ENCODE measurements at regions of chr21 and their contacts with region 1.

Region 1: DNA sequence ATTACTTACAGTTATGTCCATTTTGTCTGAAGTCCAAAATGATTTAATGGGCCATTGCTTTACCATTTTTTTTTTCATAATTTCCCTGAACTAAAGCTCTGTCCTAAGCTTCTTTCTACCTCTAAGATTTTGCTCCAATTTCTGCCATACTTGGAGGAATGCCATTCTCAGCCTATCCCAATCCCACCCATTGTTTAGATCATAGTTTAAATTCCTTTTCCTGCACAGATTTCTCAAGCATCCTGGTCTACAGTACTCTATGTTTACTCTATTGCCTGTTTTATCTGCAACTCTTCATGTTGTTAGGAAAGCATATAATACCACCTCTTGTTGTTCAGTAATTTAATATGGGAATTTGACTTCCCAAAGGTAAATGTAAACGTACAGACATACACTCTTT is 30.8 kb downstream of the ADAMTS1 start:
- DNase-seq: no peak
- H3K4me3 ChIP-seq: no peak overlapping the region
- CTCF ChIP-seq: no peak

Region 2: DNA sequence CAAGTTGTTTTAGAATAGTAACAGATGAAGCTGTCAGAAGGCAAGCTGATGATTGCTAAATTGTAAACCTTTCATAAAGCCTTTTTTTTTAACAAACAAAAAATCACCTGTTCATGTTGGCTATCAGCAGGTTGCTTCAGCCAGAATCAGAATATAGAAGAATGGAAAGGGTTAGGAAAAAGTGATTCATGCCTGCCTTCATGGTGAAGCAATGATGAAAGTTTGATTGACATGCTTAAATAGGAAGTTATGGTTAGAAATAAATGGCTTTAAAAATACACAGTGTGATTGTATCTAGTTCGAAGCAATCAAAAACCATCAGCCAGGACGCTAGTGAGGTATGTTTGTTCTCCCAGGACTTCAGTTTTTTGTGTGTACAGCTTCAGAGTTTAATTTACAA is 1041.7 kb before region 1 on chr21:
- CTCF ChIA-PET with region 1: no interaction called
- POLR2A ChIA-PET with region 1: no interaction called
- DNase-seq: no peak
- H3K4me3 ChIP-seq: no peak overlapping the region
- CTCF ChIP-seq: no peak

Region 3: DNA sequence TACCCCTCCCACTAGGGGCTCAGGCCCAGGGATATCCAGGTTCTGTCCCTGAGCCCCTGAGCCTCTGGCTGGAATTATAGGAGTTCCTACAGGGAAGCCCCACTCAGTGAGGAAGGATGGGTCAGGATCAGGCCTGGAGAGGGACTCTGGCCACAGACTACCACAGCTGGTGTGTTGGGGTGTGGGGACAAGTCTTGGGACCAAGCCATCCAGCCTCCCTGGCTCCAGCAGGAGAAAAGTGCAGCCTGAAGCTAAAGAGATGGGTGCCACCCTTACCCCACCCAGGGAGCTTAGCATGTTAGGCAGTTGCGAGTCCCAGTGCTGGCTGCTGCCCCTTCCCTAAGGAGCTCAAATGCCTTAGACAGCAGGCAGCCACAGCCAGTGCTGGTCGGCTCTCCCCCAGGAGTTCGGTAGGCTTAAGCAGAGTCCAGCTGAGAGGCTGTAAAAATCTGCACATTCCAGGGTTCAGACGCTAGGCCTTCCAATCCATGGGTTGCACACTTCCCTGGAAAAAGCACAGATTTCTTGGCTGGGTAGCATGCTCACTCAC is 145.1 kb before region 1 on chr21:
- CTCF ChIA-PET with region 1: no interaction called
- POLR2A ChIA-PET with region 1: no interaction called
- DNase-seq: no peak
- H3K4me3 ChIP-seq: no peak overlapping the region
- CTCF ChIP-seq: no peak

Region 4: DNA sequence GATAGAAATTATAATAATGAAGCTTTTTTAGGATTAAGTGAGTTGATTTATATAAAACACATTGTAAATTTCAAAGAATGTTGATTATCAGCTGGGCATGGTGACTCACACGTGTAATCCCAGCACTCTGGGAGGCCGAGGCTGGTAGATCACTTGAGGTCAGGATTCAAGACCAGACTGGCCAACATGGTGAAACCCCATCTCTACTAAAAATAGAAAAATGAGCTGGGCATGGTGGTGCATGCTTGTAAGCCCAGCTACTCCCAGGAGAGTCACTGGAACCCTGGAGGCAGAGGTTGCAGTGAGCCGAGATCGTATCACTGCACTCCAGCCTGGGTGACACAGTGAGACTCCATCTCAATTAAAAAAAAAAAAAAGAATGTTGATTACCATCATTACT is 12.4 kb after region 1 on chr21:
- CTCF ChIA-PET with region 1: interaction called, 34 read pairs
- POLR2A ChIA-PET with region 1: no interaction called
- DNase-seq: no peak
- H3K4me3 ChIP-seq: no peak overlapping the region
- CTCF ChIP-seq: no peak

Region 5: DNA sequence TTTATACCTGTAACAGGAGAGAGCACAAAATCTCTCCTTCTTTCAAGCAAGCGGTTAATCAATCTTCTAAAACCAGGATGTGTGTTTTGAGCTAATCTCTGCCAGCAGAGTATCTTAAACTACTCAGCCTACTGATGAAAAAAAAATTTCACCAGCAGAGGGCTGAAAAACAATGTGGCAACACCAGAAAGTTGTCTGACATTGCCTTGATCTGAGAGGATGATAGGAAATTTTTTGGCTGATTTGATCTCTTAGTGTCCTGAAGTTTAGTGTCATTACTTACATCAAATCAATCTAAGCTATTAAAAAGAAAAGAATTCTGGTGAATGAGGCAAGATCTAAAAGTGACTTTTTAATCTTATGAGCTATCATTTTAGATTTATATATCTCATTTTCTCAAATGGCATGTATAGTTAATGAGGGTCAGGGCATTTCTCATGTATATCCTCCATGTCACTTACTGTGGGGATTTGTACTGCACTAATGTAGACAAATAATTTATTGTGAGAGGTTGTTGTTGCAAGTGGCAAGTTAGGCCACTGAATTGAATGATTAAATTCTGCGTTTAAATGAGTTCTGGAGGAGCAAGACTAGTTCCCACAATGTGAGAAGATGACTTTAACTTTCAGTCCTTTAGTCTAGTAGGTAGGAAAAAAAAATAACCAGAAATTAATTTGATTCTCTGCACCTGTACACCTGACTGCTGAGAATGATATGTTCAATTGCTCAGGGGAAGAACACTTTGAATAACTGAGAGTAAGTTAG is 20.0 kb after region 1 on chr21:
- CTCF ChIA-PET with region 1: interaction called, 34 read pairs
- POLR2A ChIA-PET with region 1: no interaction called
- DNase-seq: no peak
- H3K4me3 ChIP-seq: no peak overlapping the region
- CTCF ChIP-seq: peak; percentile 1

Region 6: GRCh38 chr21:27024261-27024660 is 209.9 kb after region 1 on chr21:
- CTCF ChIA-PET with region 1: no interaction called
- POLR2A ChIA-PET with region 1: no interaction called
- DNase-seq: peak; percentile 72
- H3K4me3 ChIP-seq: no peak overlapping the region
- CTCF ChIP-seq: no peak